ENCODE measurements at regions of chr3 and their contacts with region 1.

Region 1: DNA sequence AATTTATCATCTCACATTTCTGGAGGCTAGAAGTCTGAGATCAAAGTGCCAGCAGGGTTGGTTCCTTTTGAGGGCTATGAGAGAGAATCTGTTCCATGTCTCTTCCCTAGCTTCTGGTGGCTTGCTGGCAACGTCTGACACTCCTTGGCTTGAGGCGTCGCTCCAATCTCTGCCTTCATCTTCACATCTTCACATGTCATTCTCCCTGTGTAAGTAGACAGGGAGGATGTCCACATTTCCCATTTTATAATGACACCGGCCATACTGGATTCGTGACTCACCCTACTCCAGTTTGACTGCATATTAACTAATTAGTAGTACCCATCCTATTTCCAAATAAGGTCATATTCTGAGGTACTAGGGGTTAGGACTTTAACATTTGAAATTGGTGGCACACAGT is 17.5 kb upstream of the ARHGAP31 start:
- DNase-seq: no peak
- H3K4me3 Mint-ChIP-seq: no peak overlapping the region
- H3K27ac Mint-ChIP-seq: no peak overlapping the region
- H3K4me1 Mint-ChIP-seq: no peaks in the 10 kb centered on the region
- H3K27me3 Mint-ChIP-seq: peaks cover 6% of the 10 kb centered on the region

Region 2: GRCh38 chr3:119352849-119353502 is 76.3 kb after region 1 on chr3:
- CTCF ChIA-PET with region 1: interaction called, 26 read pairs
- DNase-seq: no peak
- H3K4me3 Mint-ChIP-seq: no peak overlapping the region
- H3K27ac Mint-ChIP-seq: peak overlapping the region; percentile 70
- H3K4me1 Mint-ChIP-seq: peaks cover 29% of the 10 kb centered on the region
- H3K27me3 Mint-ChIP-seq: peaks cover 16% of the 10 kb centered on the region